ENCODE measurements at regions of chr20 and their contacts with region 1.

Region 1: GRCh38 chr20:56392282-56393137 is at the start of gene CSTF1:
- DNase-seq: peak; percentile 100
- H3K4me3 ChIP-seq: peak within 1 kb of the TSS; percentile 52 to 79 (median 78)
- H3K27ac ChIP-seq: peak within 1 kb of the TSS; percentile 50
- H3K4me1 ChIP-seq: peaks cover 14% of the 10 kb centered on the region
- H3K27me3 ChIP-seq: no peaks in the 10 kb centered on the region
- CTCF ChIP-seq: no peak
- POLR2A ChIP-seq: peak; percentile 51
- total RNA-seq, gene CSTF1: 32.9 and 39.6 TPM in 2 replicates

Region 2: DNA sequence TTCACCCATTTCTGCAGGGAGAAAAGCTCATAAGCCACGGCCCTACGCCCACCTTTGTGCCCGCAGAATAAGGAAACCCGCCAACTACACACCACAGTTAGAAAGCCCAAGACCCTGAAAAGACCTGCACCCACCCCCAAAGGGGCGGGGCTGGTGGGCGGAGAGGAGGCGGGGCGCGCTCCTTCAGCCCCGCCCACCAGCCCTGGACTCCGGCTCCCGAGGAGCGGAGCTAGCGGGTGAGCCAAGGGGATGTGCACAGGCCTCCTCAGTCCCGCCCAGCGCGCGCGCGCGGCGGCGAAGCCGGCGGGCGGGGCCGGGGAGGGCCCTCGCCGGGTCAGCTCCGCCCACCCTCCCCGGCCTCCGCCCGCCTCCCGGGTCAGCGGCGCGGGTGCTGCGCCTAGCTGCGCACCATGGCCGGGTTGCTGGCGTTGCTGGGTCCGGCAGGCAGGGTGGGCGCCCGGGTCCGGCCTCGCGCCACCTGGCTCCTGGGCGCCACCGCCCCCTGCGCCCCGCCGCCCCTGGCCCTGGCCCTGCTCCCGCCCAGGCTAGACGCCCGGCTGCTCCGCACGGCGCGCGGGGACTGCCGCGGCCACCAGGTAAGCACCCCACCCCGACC is 33.8 kb before region 1 on chr20 and contains the start of gene FAM210B:
- CTCF ChIA-PET with region 1: interaction called, 7 read pairs
- POLR2A ChIA-PET with region 1: interaction called, 6 read pairs
- dilution Hi-C with region 1: no loop called
- intact Hi-C with region 1: loop called (anchors 1 kb)
- DNase-seq: peak; percentile 81
- H3K4me3 ChIP-seq: peak within 1 kb of the TSS; percentile 62 to 92 (median 73)
- H3K27ac ChIP-seq: peak within 1 kb of the TSS; percentile 59
- H3K4me1 ChIP-seq: peaks cover 6% of the 10 kb centered on the region
- H3K27me3 ChIP-seq: peaks cover 3 to 4% of the 10 kb centered on the region in 2 experiments
- CTCF ChIP-seq: no peak
- POLR2A ChIP-seq: no peak
- total RNA-seq, gene FAM210B: 37.6 and 44.5 TPM in 2 replicates

Region 3: GRCh38 chr20:56376331-56376730 is 16.2 kb before region 1 on chr20:
- CTCF ChIA-PET with region 1: interaction called, 5 read pairs
- POLR2A ChIA-PET with region 1: no interaction called
- dilution Hi-C with region 1: no loop called
- intact Hi-C with region 1: loop called (anchors 2 kb)
- DNase-seq: no peak
- H3K4me3 ChIP-seq: no peak overlapping the region
- H3K27ac ChIP-seq: no peak overlapping the region
- H3K4me1 ChIP-seq: no peaks in the 10 kb centered on the region
- H3K27me3 ChIP-seq: no peaks in the 10 kb centered on the region
- CTCF ChIP-seq: no peak
- POLR2A ChIP-seq: no peak

Region 4: GRCh38 chr20:56468316-56469082 is 76.0 kb after region 1 on chr20 and contains the start of gene RTF2:
- CTCF ChIA-PET with region 1: interaction called, 6 read pairs
- POLR2A ChIA-PET with region 1: no interaction called
- dilution Hi-C with region 1: no loop called
- intact Hi-C with region 1: loop called (anchors 1 kb)
- DNase-seq: peak; percentile 95
- H3K4me3 ChIP-seq: peak within 1 kb of the TSS; percentile 83 to 95 (median 92)
- H3K27ac ChIP-seq: peak within 1 kb of the TSS; percentile 87
- H3K4me1 ChIP-seq: peaks cover 7% of the 10 kb centered on the region
- H3K27me3 ChIP-seq: peaks cover 0 to 3% of the 10 kb centered on the region in 2 experiments
- CTCF ChIP-seq: no peak
- POLR2A ChIP-seq: peak; percentile 78
- total RNA-seq, gene RTF2: 82.2 and 84.7 TPM in 2 replicates